ENCODE measurements at regions of chr2 and their contacts with region 1.

Region 1: GRCh38 chr2:160334028-160334741 is 134.1 kb upstream of the ITGB6 start:
- DNase-seq: peak; percentile 63
- H3K4me3 Mint-ChIP-seq: no peak overlapping the region
- H3K27ac Mint-ChIP-seq: peak overlapping the region; percentile 55
- H3K4me1 Mint-ChIP-seq: peaks cover 80% of the 10 kb centered on the region
- H3K27me3 Mint-ChIP-seq: no peaks in the 10 kb centered on the region

Region 2: DNA sequence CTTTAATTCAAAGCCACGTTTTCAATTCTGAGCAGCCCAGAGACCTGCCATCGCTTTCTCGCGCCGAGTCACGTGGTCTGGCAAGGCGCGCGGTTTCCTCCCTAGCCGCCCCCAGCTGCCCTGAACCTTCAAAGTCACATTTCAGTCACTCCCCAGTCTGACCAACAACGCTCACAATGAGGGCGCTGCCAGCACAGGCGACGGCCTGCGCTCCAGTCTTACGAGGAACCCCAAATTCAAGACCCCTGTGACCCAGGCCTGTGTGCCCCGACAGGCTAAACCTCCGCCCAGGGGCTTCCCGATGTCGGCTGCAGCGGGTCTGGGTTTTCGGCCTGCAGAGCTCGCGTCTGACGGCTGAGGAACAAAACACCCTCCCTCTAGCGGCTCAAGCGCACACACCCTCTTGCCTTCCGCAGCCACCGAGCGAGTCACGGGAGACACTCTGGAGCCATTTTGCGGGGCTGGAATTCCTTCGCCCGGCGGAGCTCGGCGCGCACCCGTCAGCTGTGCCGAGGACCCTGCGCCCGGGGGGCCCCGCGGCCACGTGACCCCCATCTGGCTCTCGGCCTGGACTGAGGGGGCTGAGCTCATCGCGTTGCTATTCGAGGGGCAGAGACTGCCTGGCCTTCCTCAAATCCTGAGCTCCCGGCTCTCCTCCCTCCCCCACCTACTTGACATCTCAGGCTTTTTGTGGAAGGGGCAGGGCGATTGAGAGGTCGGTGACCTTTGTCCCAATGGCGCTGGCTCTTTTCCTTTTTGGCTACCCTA is 64.2 kb before region 1 on chr2:
- CTCF ChIA-PET with region 1: interaction called, 12 read pairs
- POLR2A ChIA-PET with region 1: no interaction called
- intact Hi-C with region 1: no loop called
- DNase-seq: peak; percentile 81
- H3K4me3 Mint-ChIP-seq: peak overlapping the region; percentile 63
- H3K27ac Mint-ChIP-seq: peak overlapping the region; percentile 28
- H3K4me1 Mint-ChIP-seq: peaks cover 45% of the 10 kb centered on the region
- H3K27me3 Mint-ChIP-seq: peaks cover 5% of the 10 kb centered on the region

Region 3: GRCh38 chr2:160301420-160301819 is 32.8 kb before region 1 on chr2:
- CTCF ChIA-PET with region 1: no interaction called
- POLR2A ChIA-PET with region 1: no interaction called
- intact Hi-C with region 1: loop called (anchors 2 kb)
- DNase-seq: peak; percentile 53
- H3K4me3 Mint-ChIP-seq: no peak overlapping the region
- H3K27ac Mint-ChIP-seq: peak overlapping the region; percentile 55
- H3K4me1 Mint-ChIP-seq: peaks cover 55% of the 10 kb centered on the region
- H3K27me3 Mint-ChIP-seq: no peaks in the 10 kb centered on the region

Region 4: GRCh38 chr2:160353166-160353565 is 19.0 kb after region 1 on chr2:
- CTCF ChIA-PET with region 1: interaction called, 5 read pairs
- POLR2A ChIA-PET with region 1: no interaction called
- intact Hi-C with region 1: loop called (anchors 1 kb)
- DNase-seq: peak; percentile 48
- H3K4me3 Mint-ChIP-seq: no peak overlapping the region
- H3K27ac Mint-ChIP-seq: no peak overlapping the region
- H3K4me1 Mint-ChIP-seq: peaks cover 64% of the 10 kb centered on the region
- H3K27me3 Mint-ChIP-seq: no peaks in the 10 kb centered on the region

Region 5: DNA sequence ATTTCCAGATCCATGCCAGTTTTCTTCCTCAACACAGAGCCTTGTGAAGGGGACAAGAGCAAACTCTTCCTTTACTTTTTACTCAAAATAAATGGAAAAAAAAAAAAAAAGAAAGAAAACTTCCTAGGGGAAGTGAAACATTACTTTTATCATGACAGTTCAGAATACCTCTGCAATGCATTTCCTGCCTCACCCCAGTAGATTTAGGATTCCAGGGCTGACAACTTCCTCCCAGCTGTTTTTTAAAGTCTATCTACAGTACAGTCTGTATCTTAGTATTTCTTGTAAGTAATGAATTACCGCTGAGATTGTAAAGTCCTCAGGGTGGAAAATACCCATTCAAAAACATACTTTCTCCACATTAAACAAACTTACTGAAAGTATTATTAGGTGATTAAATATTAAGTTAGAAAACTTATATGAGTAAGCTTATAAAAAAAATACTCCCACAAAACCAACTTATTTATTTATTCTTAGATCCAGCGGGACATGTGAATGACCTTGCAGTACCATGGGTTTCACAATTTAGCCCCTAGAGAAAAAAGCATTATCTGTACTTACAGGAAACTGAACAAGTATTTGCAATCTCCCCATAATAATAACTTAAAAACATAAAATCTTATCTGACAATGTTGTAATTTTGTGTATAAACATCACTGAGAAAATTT is 41.8 kb after region 1 on chr2:
- CTCF ChIA-PET with region 1: no interaction called
- POLR2A ChIA-PET with region 1: no interaction called
- intact Hi-C with region 1: no loop called
- DNase-seq: no peak
- H3K4me3 Mint-ChIP-seq: no peak overlapping the region
- H3K27ac Mint-ChIP-seq: no peak overlapping the region
- H3K4me1 Mint-ChIP-seq: peaks cover 82% of the 10 kb centered on the region
- H3K27me3 Mint-ChIP-seq: no peaks in the 10 kb centered on the region

Region 6: GRCh38 chr2:160387558-160388262 is 53.5 kb after region 1 on chr2:
- CTCF ChIA-PET with region 1: no interaction called
- POLR2A ChIA-PET with region 1: no interaction called
- intact Hi-C with region 1: loop called (anchors 2 kb)
- DNase-seq: no peak
- H3K4me3 Mint-ChIP-seq: no peak overlapping the region
- H3K27ac Mint-ChIP-seq: peak overlapping the region; percentile 63
- H3K4me1 Mint-ChIP-seq: peaks cover 78% of the 10 kb centered on the region
- H3K27me3 Mint-ChIP-seq: no peaks in the 10 kb centered on the region

Region 7: GRCh38 chr2:160429248-160430000 is 95.2 kb after region 1 on chr2:
- CTCF ChIA-PET with region 1: interaction called, 12 read pairs
- POLR2A ChIA-PET with region 1: no interaction called
- intact Hi-C with region 1: no loop called
- DNase-seq: no peak
- H3K4me3 Mint-ChIP-seq: no peak overlapping the region
- H3K27ac Mint-ChIP-seq: peak overlapping the region; percentile 69
- H3K4me1 Mint-ChIP-seq: peaks cover 58% of the 10 kb centered on the region
- H3K27me3 Mint-ChIP-seq: no peaks in the 10 kb centered on the region